ENCODE measurements at regions of chrX and their contacts with region 1.

Region 1: DNA sequence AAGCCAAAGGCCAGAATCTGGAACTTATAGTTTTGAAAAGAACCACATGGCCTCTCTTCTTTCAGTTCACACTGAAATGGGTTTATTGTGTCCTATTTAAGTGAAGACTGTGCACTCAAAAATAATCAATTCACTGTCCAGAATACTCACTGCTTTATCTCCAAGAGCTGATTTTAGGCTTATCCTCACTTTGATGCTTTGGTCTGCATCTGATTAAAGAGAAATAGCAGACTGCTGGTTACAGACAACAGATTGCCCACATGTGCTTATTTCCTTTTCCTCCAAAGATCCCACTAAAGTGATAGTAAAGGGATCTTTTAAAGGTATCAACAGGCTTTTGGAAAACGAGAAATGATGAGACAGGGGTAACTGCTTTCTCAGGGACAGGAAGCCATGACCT is 30.6 kb downstream of the ACE2 start:
- DNase-seq: no peak
- ATAC-seq: no peak

Region 2: DNA sequence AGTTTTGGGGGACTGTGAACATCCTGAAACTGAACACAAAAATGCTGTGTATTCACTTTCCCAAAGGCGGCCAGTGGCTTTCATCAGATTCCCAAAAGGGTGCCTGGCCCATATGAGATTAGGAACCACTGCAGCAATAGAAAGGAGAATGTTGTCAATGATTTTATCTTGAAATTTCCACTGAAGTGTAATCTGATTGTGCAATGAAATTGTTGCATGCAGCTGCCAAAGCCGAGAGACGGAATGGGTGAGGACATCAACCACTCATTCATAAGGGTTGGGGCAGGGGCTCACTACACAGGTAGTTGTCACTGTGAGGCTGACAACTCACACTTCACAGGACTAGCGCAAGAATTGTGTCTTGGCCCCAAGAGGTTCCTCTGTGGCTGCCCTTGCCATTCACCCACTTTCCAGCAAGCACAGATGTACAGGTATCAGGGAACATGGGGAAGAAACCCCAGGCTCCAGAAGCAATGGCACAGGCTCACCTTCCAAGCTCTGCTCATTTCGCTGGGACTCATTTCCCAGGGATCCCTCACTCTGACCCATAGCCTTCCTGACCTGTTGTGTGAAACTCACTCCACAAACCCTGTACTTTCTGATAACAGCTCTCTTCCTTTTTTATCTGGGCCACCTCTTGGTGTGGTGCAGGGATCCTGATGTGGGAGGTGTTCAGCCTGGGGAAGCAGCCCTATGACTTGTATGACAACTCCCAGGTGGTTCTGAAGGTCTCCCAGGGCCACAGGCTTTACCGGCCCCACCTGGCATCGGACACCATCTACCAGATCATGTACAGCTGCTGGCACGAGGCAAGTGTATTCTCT is 20.7 kb before region 1 on chrX:
- intact Hi-C with region 1: loop called (anchors 1 kb)
- DNase-seq: no peak
- ATAC-seq: no peak

Region 3: DNA sequence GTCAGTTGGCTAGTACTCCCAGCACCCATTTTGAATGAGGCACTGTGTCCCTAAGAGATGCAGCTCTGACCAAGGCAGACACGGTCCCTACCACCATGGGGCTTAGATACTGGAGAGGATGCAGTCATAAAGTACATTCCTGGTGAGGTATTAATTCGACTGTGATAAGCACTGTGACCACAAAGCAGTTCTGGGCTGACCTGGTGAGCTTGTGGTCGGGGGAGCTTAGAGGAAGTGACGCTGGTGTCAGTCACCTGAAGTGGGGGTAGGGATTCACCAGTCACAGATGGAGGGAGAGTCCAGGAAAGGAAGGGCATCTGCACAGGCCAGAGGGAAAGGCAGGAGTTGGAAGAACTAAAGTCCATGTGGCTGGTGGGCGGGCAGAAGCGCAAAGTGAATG is 110.3 kb after region 1 on chrX:
- intact Hi-C with region 1: no loop called
- DNase-seq: no peak
- ATAC-seq: no peak

Measured in sciatic nerve (tissue), 2 donors.